Activated B cell treated with CpG ODN at 0.5 μM for 24 hours (primary cell): ENCODE measurements at regions of chr12 and their contacts with region 1.

Region 1: GRCh38 chr12:116559162-116559935 is at the start of gene MAP1LC3B2:
- DNase-seq: peak; percentile 77
- ATAC-seq: peak; percentile 83
- H3K4me3 Mint-ChIP-seq: peak within 1 kb of the TSS; percentile 84
- H3K27ac Mint-ChIP-seq: peak within 1 kb of the TSS; percentile 100
- H3K4me1 Mint-ChIP-seq: peaks cover 62% of the 10 kb centered on the region
- H3K27me3 Mint-ChIP-seq: no peaks in the 10 kb centered on the region
- CTCF ChIP-seq: no peak
- total RNA-seq, gene MAP1LC3B2: 1.0 and 1.9 TPM in 2 replicates

Region 2: DNA sequence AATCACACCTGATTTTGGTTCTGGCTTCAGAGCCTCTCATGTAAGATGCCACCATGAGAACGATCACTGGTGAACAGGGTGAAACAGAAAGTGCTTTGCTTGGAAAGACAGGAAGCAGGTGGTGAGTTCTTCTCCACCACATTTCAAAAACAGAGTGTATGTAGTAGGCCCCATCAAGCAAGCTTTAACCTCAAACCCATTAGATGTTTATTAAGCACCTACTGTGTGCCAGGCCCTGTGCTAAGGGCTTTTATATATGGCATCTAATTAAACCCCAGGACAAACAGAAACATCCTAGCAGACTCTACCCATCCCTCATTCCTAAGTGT is 234.0 kb before region 1 on chr12:
- CTCF ChIA-PET with region 1: no interaction called
- POLR2A ChIA-PET with region 1: interaction called, 17 read pairs
- intact Hi-C with region 1: no loop called
- DNase-seq: no peak
- ATAC-seq: peak; percentile 82
- H3K4me3 Mint-ChIP-seq: no peak overlapping the region
- H3K27ac Mint-ChIP-seq: peak overlapping the region; percentile 87
- H3K4me1 Mint-ChIP-seq: peaks cover 30% of the 10 kb centered on the region
- H3K27me3 Mint-ChIP-seq: no peaks in the 10 kb centered on the region
- CTCF ChIP-seq: no peak

Region 3: GRCh38 chr12:116508145-116509121 is 50.9 kb before region 1 on chr12:
- CTCF ChIA-PET with region 1: interaction called, 6 read pairs
- POLR2A ChIA-PET with region 1: interaction called, 18 read pairs
- intact Hi-C with region 1: loop called (anchors 1 kb)
- DNase-seq: peak; percentile 57
- ATAC-seq: peak; percentile 94
- H3K4me3 Mint-ChIP-seq: peak overlapping the region; percentile 80
- H3K27ac Mint-ChIP-seq: no peak overlapping the region
- H3K4me1 Mint-ChIP-seq: peaks cover 8% of the 10 kb centered on the region
- H3K27me3 Mint-ChIP-seq: no peaks in the 10 kb centered on the region
- CTCF ChIP-seq: no peak

Region 4: DNA sequence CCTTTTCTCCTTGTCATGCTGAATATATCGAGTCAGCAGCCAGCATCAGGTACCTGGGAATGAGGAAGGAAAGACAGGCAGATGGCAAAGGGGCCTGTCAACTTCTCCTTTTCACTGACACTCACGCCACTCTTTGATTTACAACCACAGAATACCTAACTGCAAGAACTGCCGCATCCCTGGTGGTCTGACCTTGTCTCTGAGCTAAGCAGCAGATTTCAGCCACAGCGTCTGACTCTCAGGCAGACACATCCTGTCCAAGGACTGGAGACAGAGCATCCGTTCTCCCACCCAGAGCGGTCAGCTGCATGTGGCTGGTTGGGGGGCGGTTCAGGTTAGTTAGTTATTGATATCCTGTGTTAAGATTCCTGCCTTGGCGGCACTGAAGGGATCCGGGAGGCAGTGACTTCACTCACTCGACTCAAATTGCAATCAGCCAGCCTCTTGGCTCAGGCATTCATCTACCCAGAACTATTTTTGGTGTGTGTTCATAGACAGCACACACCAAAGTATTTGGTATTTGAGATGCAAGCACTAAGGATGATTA is 11.3 kb before region 1 on chr12:
- CTCF ChIA-PET with region 1: interaction called, 6 read pairs
- POLR2A ChIA-PET with region 1: interaction called, 28 read pairs
- intact Hi-C with region 1: loop called (anchors 1 kb)
- DNase-seq: peak; percentile 30
- ATAC-seq: peak; percentile 76
- H3K4me3 Mint-ChIP-seq: peak overlapping the region; percentile 42
- H3K27ac Mint-ChIP-seq: peak overlapping the region; percentile 57
- H3K4me1 Mint-ChIP-seq: peaks cover 17% of the 10 kb centered on the region
- H3K27me3 Mint-ChIP-seq: no peaks in the 10 kb centered on the region
- CTCF ChIP-seq: no peak

Region 5: DNA sequence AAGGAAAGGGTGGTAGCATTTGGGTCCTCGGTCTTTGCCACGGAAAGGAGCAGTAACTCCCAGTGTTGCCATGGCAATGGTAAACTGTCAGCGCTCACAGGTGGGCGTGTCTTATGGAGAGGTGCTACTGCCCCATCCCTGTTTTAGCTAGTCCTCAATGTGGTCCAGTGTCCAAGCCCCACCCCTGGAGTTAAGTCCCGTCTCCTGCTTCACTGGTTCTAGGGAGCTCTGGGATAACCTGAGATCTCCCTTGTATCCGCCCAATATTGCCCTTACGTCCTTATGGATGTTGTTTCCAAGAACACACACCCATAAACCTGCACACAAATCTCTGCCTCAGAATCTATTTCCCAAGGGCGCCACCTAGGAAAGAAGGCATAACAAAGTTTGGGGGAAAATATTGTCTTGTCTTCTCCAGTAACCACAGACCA is 114.3 kb after region 1 on chr12:
- CTCF ChIA-PET with region 1: no interaction called
- POLR2A ChIA-PET with region 1: interaction called, 7 read pairs
- intact Hi-C with region 1: loop called (anchors 1 kb)
- DNase-seq: no peak
- ATAC-seq: no peak
- H3K4me3 Mint-ChIP-seq: peak overlapping the region; percentile 13
- H3K27ac Mint-ChIP-seq: no peak overlapping the region
- H3K4me1 Mint-ChIP-seq: peaks cover 70% of the 10 kb centered on the region
- H3K27me3 Mint-ChIP-seq: no peaks in the 10 kb centered on the region
- CTCF ChIP-seq: no peak